Adrenal gland (tissue), 19 donors: ENCODE measurements at regions of chr18 and their contacts with region 1.

Region 1: GRCh38 chr18:58124475-58124874 is 80.4 kb downstream of the NEDD4L start:
- DNase-seq: no peak
- H3K4me3 ChIP-seq: no peak overlapping the region
- H3K27ac ChIP-seq: no peak overlapping the region
- H3K4me1 ChIP-seq: no peaks in the 10 kb centered on the region
- H3K27me3 ChIP-seq: no peaks in the 10 kb centered on the region
- CTCF ChIP-seq: no peak
- POLR2A ChIP-seq: no peak

Region 2: GRCh38 chr18:57881818-57882413 is 242.6 kb before region 1 on chr18:
- intact Hi-C with region 1: loop called (anchors 5 kb)
- DNase-seq: peak; percentile 58 to 86 (median 72)
- H3K4me3 ChIP-seq: no peak overlapping the region
- H3K27ac ChIP-seq: no peak overlapping the region
- H3K4me1 ChIP-seq: no peaks in the 10 kb centered on the region
- H3K27me3 ChIP-seq: no peaks in the 10 kb centered on the region
- CTCF ChIP-seq: peak; percentile 82 to 96 (median 93)
- POLR2A ChIP-seq: no peak

Region 3: GRCh38 chr18:57931038-57931437 is 193.4 kb before region 1 on chr18:
- intact Hi-C with region 1: no loop called
- DNase-seq: no peak
- H3K4me3 ChIP-seq: no peak overlapping the region
- H3K27ac ChIP-seq: no peak overlapping the region
- H3K4me1 ChIP-seq: peaks cover 0 to 1% of the 10 kb centered on the region in 2 donors
- H3K27me3 ChIP-seq: no peaks in the 10 kb centered on the region
- CTCF ChIP-seq: no peak
- POLR2A ChIP-seq: no peak

Region 4: DNA sequence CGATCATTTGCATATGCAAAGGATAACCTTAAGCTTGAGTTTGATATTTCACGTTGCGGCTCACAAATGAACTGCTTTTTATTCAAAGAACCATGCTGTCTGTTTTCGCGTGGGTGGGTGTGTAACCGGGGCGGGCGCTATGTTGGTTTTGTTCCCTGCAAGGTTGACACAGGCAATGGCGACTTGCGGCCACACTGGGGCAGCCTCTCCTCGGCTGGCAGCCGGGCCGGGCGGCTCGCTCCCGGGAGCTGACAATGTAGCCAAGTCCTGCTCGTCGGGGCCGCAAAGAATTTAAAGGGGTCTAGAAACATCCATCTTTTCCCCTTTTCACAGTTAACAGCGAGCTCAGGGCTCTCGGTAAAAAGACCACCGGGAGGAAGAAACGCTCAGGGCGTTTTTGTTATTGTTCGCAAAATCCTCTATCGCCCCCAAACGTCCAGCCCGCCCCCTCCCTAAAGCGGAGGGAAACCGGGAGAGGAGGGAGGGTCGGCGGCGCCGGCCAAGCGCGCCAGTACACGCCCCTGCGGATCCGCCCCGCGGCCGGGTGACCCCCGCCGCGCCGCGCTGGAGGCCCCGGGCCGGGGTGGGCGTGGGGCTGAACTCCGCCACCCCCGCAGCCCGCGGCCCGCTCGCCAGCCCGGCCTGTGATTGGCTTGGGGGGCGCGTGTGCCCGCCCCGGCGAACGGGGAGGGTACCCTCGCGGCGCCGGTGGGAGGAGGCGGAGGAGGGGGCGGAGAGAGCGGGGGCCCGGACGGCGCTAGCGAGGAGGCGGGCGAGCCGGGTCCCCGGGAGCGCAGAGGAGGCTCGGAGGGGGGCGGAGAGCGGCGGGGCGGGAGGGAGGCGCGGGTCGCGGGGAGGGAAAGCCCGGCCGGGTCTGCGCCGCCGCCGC is 80.7 kb before region 1 on chr18 and contains the start of gene NEDD4L:
- intact Hi-C with region 1: loop called (anchors 2 to 5 kb)
- DNase-seq: peak; percentile 86 to 93 (median 88)
- H3K4me3 ChIP-seq: peak within 1 kb of the TSS; percentile 37 to 95 (median 87)
- H3K27ac ChIP-seq: peak within 1 kb of the TSS in 4 of 5 donors; percentile 62 to 92 (median 88)
- H3K4me1 ChIP-seq: peaks cover 20 to 28% of the 10 kb centered on the region in 2 donors
- H3K27me3 ChIP-seq: no peaks in the 10 kb centered on the region
- CTCF ChIP-seq: peak; percentile 72 to 89 (median 86)
- POLR2A ChIP-seq: no peak
- total RNA-seq, gene NEDD4L: 23.7 to 110 (median 45.9) TPM